ENCODE measurements at regions of chr15 and their contacts with region 1.

Region 1: GRCh38 chr15:38002883-38003477 is 68.5 kb downstream of the TMCO5A start:
- DNase-seq: peak; percentile 85

Region 2: DNA sequence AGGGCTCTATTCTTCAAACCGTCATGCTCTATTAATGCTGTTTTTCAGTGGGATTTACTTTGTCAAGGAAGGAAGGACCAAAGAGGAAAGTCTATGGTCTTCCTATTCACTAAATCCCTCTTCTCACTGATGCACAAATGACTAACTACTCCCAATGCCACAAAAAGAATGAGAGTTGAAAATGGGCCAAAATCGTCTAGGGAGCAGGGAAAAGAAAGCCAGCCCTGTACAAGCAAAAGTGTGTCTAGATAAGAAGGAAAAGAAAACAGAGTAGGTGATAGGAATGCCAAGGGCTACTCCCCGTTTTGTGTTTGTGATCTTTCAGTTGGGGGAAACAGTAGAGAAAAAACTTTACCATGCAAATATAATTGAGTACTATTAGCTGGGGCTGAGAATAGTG is 165.7 kb before region 1 on chr15:
- in situ Hi-C with region 1: no loop called
- DNase-seq: no peak

Region 3: GRCh38 chr15:38168467-38169070 is 165.6 kb after region 1 on chr15:
- in situ Hi-C with region 1: no loop called
- DNase-seq: no peak

Region 4: GRCh38 chr15:38354315-38354929 is 351.4 kb after region 1 on chr15:
- in situ Hi-C with region 1: loop called (anchors 25 kb)
- DNase-seq: peak; percentile 85